Natural killer cell (primary cell): ENCODE measurements at regions of chr2 and their contacts with region 1.

Region 1: DNA sequence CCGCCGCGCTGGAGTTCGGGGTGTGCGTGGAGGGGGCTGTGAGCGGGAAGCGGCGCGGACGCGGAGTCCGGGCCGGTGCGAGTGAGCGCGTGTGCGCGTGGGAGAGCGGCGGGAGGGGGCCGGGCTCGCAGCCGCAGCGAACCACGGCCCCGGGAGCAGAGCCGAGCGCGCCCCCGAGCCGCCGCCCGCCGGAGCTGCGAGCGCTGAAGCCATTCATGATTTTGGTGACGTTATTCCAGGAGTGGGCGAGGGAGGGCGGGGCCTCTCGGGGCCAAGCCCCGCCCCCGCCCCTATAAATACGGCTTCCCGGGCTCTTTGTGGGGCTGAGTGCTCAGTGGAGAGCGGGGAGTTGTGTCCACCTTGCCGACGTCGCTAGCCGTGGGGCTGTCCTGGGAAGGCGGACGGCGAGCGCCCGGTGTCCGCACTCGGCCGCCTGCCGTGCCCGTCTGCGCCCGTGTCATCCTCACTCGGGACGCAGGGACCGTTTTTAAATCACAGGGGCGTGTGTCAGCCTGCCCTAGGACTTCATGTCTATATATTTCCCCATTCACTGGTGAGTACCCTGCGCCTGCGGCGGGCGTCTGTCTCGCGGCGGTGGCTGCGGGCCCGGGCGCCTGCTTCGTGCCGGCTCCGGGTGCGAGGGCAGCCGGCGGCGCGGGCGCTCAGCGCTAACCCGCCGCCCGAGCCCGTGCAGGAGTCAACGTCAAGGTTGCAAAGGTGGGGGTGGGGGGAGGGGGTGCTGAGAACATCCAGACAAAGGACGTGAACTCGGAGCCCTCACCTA is at the start of gene LBH:
- DNase-seq: peak; percentile 84 to 96
- ATAC-seq: peak; percentile 59 to 82 (median 66)
- H3K4me3 ChIP-seq: peak within 1 kb of the TSS; percentile 90
- H3K4me3 Mint-ChIP-seq: peak within 1 kb of the TSS; percentile 94
- H3K27ac ChIP-seq: peak within 1 kb of the TSS; percentile 96
- H3K27ac Mint-ChIP-seq: peak within 1 kb of the TSS; percentile 85 to 93
- H3K4me1 ChIP-seq: peaks cover 60% of the 10 kb centered on the region
- H3K4me1 Mint-ChIP-seq: peaks cover 53 to 73% of the 10 kb centered on the region in 2 donors
- H3K27me3 ChIP-seq: no peaks in the 10 kb centered on the region
- H3K27me3 Mint-ChIP-seq: no peaks in the 10 kb centered on the region
- CTCF ChIP-seq: no peak
- total RNA-seq, gene LBH: 157 to 197 (median 158) TPM

Region 2: GRCh38 chr2:29865512-29865911 is 365.9 kb before region 1 on chr2:
- intact Hi-C with region 1: no loop called
- DNase-seq: no peak
- ATAC-seq: no peak
- H3K4me3 ChIP-seq: no peak overlapping the region
- H3K4me3 Mint-ChIP-seq: no peak overlapping the region
- H3K27ac ChIP-seq: no peak overlapping the region
- H3K27ac Mint-ChIP-seq: no peak overlapping the region
- H3K4me1 ChIP-seq: no peaks in the 10 kb centered on the region
- H3K4me1 Mint-ChIP-seq: no peaks in the 10 kb centered on the region
- H3K27me3 ChIP-seq: peaks cover 4% of the 10 kb centered on the region
- H3K27me3 Mint-ChIP-seq: peaks cover 28 to 41% of the 10 kb centered on the region in 2 donors
- CTCF ChIP-seq: no peak

Region 3: DNA sequence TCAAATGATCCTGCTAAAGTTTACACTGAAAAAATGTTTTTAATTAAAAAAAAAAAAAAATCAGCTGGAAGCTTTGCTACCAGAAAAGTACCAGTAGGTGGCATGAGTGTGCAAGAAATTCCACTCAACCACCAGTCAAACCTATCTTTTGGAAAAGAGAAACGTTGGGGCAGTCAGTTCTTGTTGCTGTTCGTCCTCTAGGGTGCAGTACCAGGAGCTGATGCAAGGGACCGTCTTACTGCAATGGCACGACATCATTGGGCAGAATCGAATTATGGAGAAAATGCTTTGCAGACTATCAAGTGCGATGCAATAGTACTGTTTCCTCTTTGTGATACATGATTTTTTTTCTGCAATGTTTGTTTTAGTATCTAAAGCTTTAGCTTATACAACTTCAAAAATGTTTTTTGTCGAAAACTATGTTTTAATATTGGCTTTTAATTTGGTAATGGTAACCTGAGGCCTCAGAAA is 66.3 kb before region 1 on chr2:
- intact Hi-C with region 1: loop called (anchors 5 kb)
- DNase-seq: peak; percentile 32 to 90
- ATAC-seq: peak; percentile 54 to 89 (median 85)
- H3K4me3 ChIP-seq: no peak overlapping the region
- H3K4me3 Mint-ChIP-seq: peak overlapping the region; percentile 61
- H3K27ac ChIP-seq: no peak overlapping the region
- H3K27ac Mint-ChIP-seq: peak overlapping the region in 1 of 2 donors; percentile 70
- H3K4me1 ChIP-seq: no peaks in the 10 kb centered on the region
- H3K4me1 Mint-ChIP-seq: peaks cover 21 to 26% of the 10 kb centered on the region in 2 donors
- H3K27me3 ChIP-seq: no peaks in the 10 kb centered on the region
- H3K27me3 Mint-ChIP-seq: no peaks in the 10 kb centered on the region
- CTCF ChIP-seq: peak; percentile 80

Region 4: GRCh38 chr2:30315391-30316063 is 84.1 kb after region 1 on chr2:
- intact Hi-C with region 1: loop called (anchors 1 kb)
- DNase-seq: peak in 1 of 2 donors; percentile 72
- ATAC-seq: peak; percentile 84 to 93 (median 85)
- H3K4me3 ChIP-seq: no peak overlapping the region
- H3K4me3 Mint-ChIP-seq: peak overlapping the region; percentile 48
- H3K27ac ChIP-seq: peak overlapping the region; percentile 15
- H3K27ac Mint-ChIP-seq: peak overlapping the region; percentile 76 to 85
- H3K4me1 ChIP-seq: peaks cover 30% of the 10 kb centered on the region
- H3K4me1 Mint-ChIP-seq: peaks cover 26 to 31% of the 10 kb centered on the region in 2 donors
- H3K27me3 ChIP-seq: no peaks in the 10 kb centered on the region
- H3K27me3 Mint-ChIP-seq: no peaks in the 10 kb centered on the region
- CTCF ChIP-seq: no peak

Region 5: GRCh38 chr2:30421604-30422443 is 190.4 kb after region 1 on chr2:
- intact Hi-C with region 1: loop called (anchors 2 kb)
- DNase-seq: peak in 1 of 2 donors; percentile 69
- ATAC-seq: no peak
- H3K4me3 ChIP-seq: no peak overlapping the region
- H3K4me3 Mint-ChIP-seq: peak overlapping the region; percentile 65
- H3K27ac ChIP-seq: peak overlapping the region; percentile 69
- H3K27ac Mint-ChIP-seq: peak overlapping the region; percentile 83 to 90
- H3K4me1 ChIP-seq: peaks cover 23% of the 10 kb centered on the region
- H3K4me1 Mint-ChIP-seq: peaks cover 34 to 36% of the 10 kb centered on the region in 2 donors
- H3K27me3 ChIP-seq: no peaks in the 10 kb centered on the region
- H3K27me3 Mint-ChIP-seq: no peaks in the 10 kb centered on the region
- CTCF ChIP-seq: no peak